MCF 10A (cell line): ENCODE measurements at regions of chr4 and their contacts with region 1.

Region 1: DNA sequence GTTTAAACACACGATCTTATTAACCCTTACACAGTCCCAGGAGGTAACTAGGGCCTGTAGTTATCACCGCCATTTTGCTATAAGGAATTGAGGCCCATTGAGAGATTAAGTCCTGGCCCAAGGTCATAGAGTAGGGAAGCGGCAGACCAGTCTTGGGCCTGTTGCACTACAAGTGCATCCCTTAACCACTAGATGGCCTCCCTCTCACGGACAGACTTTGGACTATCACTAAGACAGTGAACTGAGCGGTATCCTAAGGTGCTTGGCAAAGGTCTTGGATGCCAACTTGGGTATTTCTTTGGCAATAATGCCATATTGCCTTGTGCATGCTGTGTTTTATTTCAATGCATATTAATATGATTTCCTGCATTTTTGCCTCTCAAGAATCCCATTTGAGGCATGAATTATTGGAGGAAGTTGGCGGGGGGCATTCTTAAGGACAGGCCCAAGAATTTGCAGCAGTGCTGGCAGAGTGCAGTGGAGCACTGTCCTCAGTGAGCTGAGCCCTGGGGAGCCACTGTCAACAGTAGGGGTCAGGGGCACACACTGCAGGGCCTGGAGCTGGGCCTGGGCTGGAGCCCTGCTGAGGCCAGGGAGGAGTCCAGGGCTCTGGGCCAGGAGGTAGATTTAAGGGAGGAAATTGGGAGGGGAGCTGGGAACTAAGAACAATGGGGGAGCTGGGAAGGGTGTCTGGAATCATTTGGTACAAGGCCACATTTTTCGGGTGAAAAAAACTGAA is 147.4 kb downstream of the SMIM20 start:
- DNase-seq: peak; percentile 78
- H3K4me3 Mint-ChIP-seq: no peak overlapping the region
- H3K27ac Mint-ChIP-seq: no peak overlapping the region
- H3K4me1 Mint-ChIP-seq: peaks cover 7% of the 10 kb centered on the region
- H3K27me3 Mint-ChIP-seq: no peaks in the 10 kb centered on the region
- CTCF ChIP-seq: peak; percentile 61

Region 2: GRCh38 chr4:25986807-25987206 is 74.6 kb before region 1 on chr4:
- CTCF ChIA-PET with region 1: interaction called, 33 read pairs
- POLR2A ChIA-PET with region 1: no interaction called
- intact Hi-C with region 1: loop called (anchors 1 kb)
- DNase-seq: no peak
- H3K4me3 Mint-ChIP-seq: no peak overlapping the region
- H3K27ac Mint-ChIP-seq: no peak overlapping the region
- H3K4me1 Mint-ChIP-seq: no peaks in the 10 kb centered on the region
- H3K27me3 Mint-ChIP-seq: no peaks in the 10 kb centered on the region
- CTCF ChIP-seq: no peak

Region 3: GRCh38 chr4:26022346-26023202 is 38.8 kb before region 1 on chr4:
- CTCF ChIA-PET with region 1: no interaction called
- POLR2A ChIA-PET with region 1: no interaction called
- intact Hi-C with region 1: loop called (anchors 5 kb)
- DNase-seq: peak; percentile 80
- H3K4me3 Mint-ChIP-seq: peak overlapping the region; percentile 5
- H3K27ac Mint-ChIP-seq: peak overlapping the region; percentile 10
- H3K4me1 Mint-ChIP-seq: peaks cover 35% of the 10 kb centered on the region
- H3K27me3 Mint-ChIP-seq: no peaks in the 10 kb centered on the region
- CTCF ChIP-seq: no peak

Region 4: GRCh38 chr4:26325191-26325590 is 263.8 kb after region 1 on chr4:
- CTCF ChIA-PET with region 1: interaction called, 11 read pairs
- POLR2A ChIA-PET with region 1: interaction called, 9 read pairs
- intact Hi-C with region 1: loop called (anchors 1 kb)
- DNase-seq: peak; percentile 64
- H3K4me3 Mint-ChIP-seq: no peak overlapping the region
- H3K27ac Mint-ChIP-seq: no peak overlapping the region
- H3K4me1 Mint-ChIP-seq: peaks cover 29% of the 10 kb centered on the region
- H3K27me3 Mint-ChIP-seq: no peaks in the 10 kb centered on the region
- CTCF ChIP-seq: peak; percentile 31

Region 5: GRCh38 chr4:26410385-26411293 is 349.2 kb after region 1 on chr4:
- CTCF ChIA-PET with region 1: interaction called, 16 read pairs
- POLR2A ChIA-PET with region 1: no interaction called
- intact Hi-C with region 1: loop called (anchors 1 kb)
- DNase-seq: peak; percentile 63
- H3K4me3 Mint-ChIP-seq: no peak overlapping the region
- H3K27ac Mint-ChIP-seq: no peak overlapping the region
- H3K4me1 Mint-ChIP-seq: peaks cover 10% of the 10 kb centered on the region
- H3K27me3 Mint-ChIP-seq: no peaks in the 10 kb centered on the region
- CTCF ChIP-seq: peak; percentile 48